ENCODE measurements at regions of chr18 and their contacts with region 1.

Region 1: DNA sequence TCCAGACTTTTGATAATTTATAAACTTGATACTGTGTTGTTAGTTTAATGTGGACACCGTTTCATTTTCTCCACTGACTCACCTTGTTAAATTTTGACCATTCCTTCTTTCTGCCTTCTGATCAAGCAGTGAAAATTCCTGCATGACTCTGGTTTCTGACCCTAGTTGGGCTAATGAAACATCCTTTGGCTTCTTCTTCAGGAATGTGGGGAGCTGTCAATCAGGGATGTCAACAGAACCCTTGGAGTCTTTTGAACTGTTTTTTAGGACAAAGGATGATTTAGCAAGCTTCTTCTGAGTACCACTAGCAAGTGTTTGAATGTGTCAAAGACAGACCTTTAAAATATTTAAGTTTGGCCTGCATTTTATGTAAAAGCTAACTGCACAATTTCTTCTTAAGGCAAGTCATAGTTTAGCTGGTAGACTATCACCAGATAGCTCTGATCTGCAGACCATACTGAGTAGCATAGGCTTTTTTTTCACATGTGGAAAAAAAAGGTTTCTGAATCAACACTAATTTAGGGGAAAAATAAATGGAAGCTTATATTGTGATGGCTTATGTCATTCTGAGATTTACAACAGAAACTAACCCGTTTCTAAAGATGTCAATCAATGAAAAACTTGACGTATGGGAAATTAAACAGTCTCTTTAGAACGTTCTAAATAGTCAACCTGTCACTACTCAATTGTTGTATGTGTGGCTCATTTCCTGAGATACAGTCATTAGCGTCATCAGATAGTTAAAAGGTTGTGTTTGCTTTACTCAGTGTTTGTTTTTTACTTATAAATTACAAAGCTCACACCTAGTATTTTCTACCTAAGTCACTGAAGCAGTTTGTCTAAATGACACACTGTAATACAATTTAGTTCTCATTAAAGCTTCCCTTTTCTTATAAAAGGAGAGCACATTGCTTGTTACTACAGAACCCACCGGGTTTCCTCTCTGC is 311.4 kb downstream of the PTPRM start:
- DNase-seq: peak; percentile 91
- ATAC-seq: peak; percentile 68
- H3K4me3 ChIP-seq: peak overlapping the region; percentile 25
- H3K27ac ChIP-seq: peak overlapping the region; percentile 97
- H3K4me1 ChIP-seq: peaks cover 35% of the 10 kb centered on the region
- H3K27me3 ChIP-seq: no peaks in the 10 kb centered on the region
- CTCF ChIP-seq: no peak

Region 2: GRCh38 chr18:7566567-7567473 is 311.7 kb before region 1 on chr18 and contains the start of gene PTPRM:
- CTCF ChIA-PET with region 1: interaction called, 8 read pairs
- POLR2A ChIA-PET with region 1: interaction called, 9 read pairs
- intact Hi-C with region 1: loop called (anchors 2 kb)
- DNase-seq: peak; percentile 88
- ATAC-seq: peak; percentile 77
- H3K4me3 ChIP-seq: peak within 1 kb of the TSS; percentile 95
- H3K27ac ChIP-seq: peak within 1 kb of the TSS; percentile 33
- H3K4me1 ChIP-seq: peaks cover 33% of the 10 kb centered on the region
- H3K27me3 ChIP-seq: no peaks in the 10 kb centered on the region
- CTCF ChIP-seq: no peak
- total RNA-seq, gene PTPRM: 45.6 and 61.3 TPM in 2 replicates

Region 3: DNA sequence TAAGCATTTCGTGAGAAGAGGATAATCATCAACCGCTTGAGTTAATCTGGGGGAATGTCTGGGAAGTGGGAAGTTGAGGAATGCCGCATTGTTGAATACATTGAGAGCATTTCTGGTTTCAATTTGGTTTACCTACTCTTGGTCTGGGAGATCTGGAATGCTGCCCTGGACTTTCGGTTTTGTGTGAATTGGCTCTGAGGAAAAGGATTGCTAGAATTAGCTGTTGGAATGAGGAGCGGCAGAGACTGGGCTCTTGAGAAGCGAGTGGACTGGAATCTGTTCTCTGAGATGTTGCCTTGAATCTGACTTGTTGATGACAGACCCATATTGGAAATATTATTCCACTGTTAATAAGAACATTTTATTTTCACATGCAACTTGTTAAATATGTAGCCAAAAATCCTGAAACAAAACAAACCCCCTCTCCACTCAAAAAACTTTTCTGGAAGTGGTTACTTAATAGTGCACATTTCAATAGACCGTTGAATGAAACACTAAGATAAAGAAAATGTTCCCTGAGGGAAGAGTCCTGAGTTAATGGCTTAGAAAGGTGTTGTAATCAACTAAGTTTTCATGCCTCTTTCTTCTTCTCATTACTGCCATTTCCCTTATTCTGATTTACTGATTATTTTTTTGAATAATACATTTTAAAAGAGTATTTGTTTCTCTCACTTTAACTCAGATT is 260.7 kb before region 1 on chr18:
- CTCF ChIA-PET with region 1: no interaction called
- POLR2A ChIA-PET with region 1: no interaction called
- intact Hi-C with region 1: no loop called
- DNase-seq: no peak
- ATAC-seq: no peak
- H3K4me3 ChIP-seq: no peak overlapping the region
- H3K27ac ChIP-seq: no peak overlapping the region
- H3K4me1 ChIP-seq: no peaks in the 10 kb centered on the region
- H3K27me3 ChIP-seq: no peaks in the 10 kb centered on the region
- CTCF ChIP-seq: no peak

Region 4: GRCh38 chr18:7856733-7857132 is 21.8 kb before region 1 on chr18:
- CTCF ChIA-PET with region 1: no interaction called
- POLR2A ChIA-PET with region 1: interaction called, 5 read pairs
- intact Hi-C with region 1: loop called (anchors 1 kb)
- DNase-seq: peak; percentile 19
- ATAC-seq: peak; percentile 25
- H3K4me3 ChIP-seq: no peak overlapping the region
- H3K27ac ChIP-seq: peak overlapping the region; percentile 15; the same call in 1 of the 2 replicates
- H3K4me1 ChIP-seq: peaks cover 14% of the 10 kb centered on the region
- H3K27me3 ChIP-seq: no peaks in the 10 kb centered on the region
- CTCF ChIP-seq: no peak

Region 5: GRCh38 chr18:7926526-7926925 is 48.0 kb after region 1 on chr18:
- CTCF ChIA-PET with region 1: no interaction called
- POLR2A ChIA-PET with region 1: no interaction called
- intact Hi-C with region 1: loop called (anchors 1 kb)
- DNase-seq: peak; percentile 48
- ATAC-seq: 0 out of 2 replicates have a peak, but pooled peaks have one; percentile 2
- H3K4me3 ChIP-seq: no peak overlapping the region
- H3K27ac ChIP-seq: no peak overlapping the region
- H3K4me1 ChIP-seq: peaks cover 34% of the 10 kb centered on the region
- H3K27me3 ChIP-seq: no peaks in the 10 kb centered on the region
- CTCF ChIP-seq: peak; percentile 59

Region 6: DNA sequence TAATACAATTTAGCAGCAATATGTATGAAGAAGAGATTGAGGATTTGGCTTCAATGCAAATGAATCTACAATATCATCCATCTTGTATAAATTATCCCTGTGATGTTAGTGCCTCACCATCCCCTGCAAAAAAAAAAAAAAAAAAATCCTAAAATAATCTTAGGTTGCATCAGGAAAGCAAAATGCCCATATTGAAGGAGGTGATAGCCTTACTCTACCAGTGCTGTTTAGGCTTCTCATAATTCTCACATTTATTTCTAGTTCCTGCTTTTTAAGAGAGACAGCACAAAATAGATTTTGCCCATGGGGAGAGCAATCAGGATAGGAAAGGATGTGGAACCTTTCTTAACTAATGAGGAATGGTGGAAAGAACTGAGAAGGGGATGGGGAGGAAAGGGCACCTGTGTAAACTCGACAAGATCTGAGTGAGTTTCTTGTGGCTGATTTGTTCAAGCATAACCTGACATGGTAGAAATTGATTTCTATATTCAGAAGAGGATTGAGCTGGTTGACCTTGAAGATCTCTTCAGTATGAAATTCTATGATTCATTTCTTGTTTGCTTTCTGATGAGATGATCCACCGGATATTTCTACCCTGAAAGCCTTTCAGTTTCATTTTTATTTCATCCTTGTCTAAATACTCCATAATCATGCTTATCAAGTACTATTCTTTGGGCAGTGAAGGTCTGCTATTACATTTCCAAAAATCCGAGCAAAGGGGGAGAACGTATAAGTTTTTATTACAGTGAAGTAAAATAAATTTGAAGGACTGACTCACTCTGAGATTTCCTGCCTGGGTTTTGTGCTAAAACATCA is 79.8 kb after region 1 on chr18:
- CTCF ChIA-PET with region 1: interaction called, 3 read pairs
- POLR2A ChIA-PET with region 1: no interaction called
- intact Hi-C with region 1: loop called (anchors 1 kb)
- DNase-seq: peak; percentile 74
- ATAC-seq: peak; percentile 82
- H3K4me3 ChIP-seq: peak overlapping the region; percentile 59
- H3K27ac ChIP-seq: peak overlapping the region; percentile 83
- H3K4me1 ChIP-seq: peaks cover 31% of the 10 kb centered on the region
- H3K27me3 ChIP-seq: no peaks in the 10 kb centered on the region
- CTCF ChIP-seq: no peak

Region 7: DNA sequence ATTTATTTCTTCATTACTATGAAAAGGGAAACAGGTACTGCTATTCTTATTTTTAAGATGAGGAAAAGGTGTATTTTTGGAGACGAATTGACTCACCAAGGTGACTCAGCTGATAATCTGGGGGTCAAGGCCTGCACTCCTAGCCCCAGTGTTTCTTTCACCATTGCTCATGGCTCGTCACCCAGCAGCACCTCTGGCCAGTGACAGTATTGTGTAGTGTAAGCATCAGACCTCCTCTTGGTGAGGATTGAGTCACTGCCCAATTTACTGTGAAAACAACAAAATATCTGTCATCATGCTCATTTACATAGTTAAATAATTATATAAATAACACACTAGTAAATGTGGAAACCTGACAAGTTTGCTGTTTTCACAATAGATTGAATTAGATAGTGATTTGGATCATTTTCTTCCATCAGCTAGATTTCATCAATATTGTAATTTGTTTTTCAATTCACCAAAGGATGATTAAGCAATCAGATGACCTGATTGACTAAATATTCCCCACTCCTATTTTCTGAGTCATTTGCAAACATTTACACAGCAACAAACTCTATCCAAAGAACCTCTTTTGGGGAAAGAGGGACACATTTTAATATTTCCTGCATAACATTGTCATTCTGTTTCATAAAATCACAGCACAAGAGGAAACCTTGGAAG is 237.9 kb after region 1 on chr18:
- CTCF ChIA-PET with region 1: no interaction called
- POLR2A ChIA-PET with region 1: no interaction called
- intact Hi-C with region 1: loop called (anchors 1 kb)
- DNase-seq: peak; percentile 93
- ATAC-seq: peak; percentile 99
- H3K4me3 ChIP-seq: peak overlapping the region; percentile 31; the same call in 1 of the 2 replicates
- H3K27ac ChIP-seq: peak overlapping the region; percentile 93
- H3K4me1 ChIP-seq: peaks cover 32% of the 10 kb centered on the region
- H3K27me3 ChIP-seq: no peaks in the 10 kb centered on the region
- CTCF ChIP-seq: no peak

Region 8: GRCh38 chr18:8389391-8390340 is 511.1 kb after region 1 on chr18:
- CTCF ChIA-PET with region 1: no interaction called
- POLR2A ChIA-PET with region 1: no interaction called
- intact Hi-C with region 1: loop called (anchors 5 kb)
- DNase-seq: peak; percentile 86
- ATAC-seq: peak; percentile 100
- H3K4me3 ChIP-seq: no peak overlapping the region
- H3K27ac ChIP-seq: no peak overlapping the region
- H3K4me1 ChIP-seq: no peaks in the 10 kb centered on the region
- H3K27me3 ChIP-seq: no peaks in the 10 kb centered on the region
- CTCF ChIP-seq: peak; percentile 97

Measured in PC-3 (cell line).